Gastrocnemius medialis (tissue), 4 donors: ENCODE measurements at regions of chr1 and their contacts with region 1.

Region 1: DNA sequence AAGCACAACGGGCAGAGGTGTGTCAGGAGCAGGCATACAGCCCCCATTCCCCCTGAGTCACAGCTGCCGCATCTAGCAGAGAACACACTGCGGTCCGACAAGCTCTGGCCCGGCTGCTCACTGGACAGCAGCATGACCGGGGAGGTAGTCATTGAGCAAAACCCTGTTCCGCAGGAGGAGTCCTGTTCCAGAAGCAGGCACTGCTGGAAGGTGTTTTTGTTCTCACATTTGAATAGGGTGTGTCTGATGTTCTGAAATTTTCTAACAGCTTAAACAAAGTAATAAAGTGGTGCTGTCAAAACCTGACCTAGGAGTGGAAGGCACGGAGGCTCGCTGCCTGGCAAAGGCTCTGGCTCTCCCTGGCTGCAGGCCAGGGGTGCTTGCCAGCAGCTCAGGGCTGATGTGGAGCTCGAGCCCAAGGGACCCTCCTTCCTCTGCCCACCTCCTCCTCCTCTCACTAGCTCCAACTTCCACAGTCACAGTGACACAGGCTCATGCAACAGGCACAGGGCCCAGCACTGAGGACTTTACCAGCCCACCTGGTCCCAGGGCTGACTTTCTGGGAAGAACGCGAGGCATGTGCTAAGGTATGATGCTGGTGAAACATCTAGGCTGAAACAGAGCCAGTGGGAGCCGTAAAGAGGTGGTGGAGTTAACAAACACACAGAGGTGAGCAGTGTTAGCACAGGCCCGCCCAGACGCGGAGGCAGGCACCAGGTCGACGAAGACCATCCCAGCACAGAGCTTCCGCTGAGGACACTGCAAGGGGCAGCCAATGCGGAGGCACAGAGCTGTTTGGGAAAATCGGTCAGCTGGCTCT is 118.6 kb upstream of the IFFO2 start:
- DNase-seq: peak; percentile 82 to 83
- ATAC-seq: peak; percentile 75 to 77
- H3K4me3 ChIP-seq: no peak overlapping the region
- H3K27ac ChIP-seq: peak overlapping the region; percentile 66 to 91 (median 79)
- H3K4me1 ChIP-seq: peaks cover 39 to 48% of the 10 kb centered on the region in 2 donors
- H3K27me3 ChIP-seq: no peaks in the 10 kb centered on the region
- CTCF ChIP-seq: no peak
- POLR2A ChIP-seq: peak in 1 of 2 donors; percentile 33

Region 2: GRCh38 chr1:19046972-19047731 is 28.0 kb before region 1 on chr1:
- in situ Hi-C with region 1: no loop called
- intact Hi-C with region 1: loop called (anchors 1 kb)
- DNase-seq: no peak
- ATAC-seq: no peak
- H3K4me3 ChIP-seq: no peak overlapping the region
- H3K27ac ChIP-seq: no peak overlapping the region
- H3K4me1 ChIP-seq: no peaks in the 10 kb centered on the region
- H3K27me3 ChIP-seq: peaks cover 24 to 27% (median 26%) of the 10 kb centered on the region in 3 donors
- CTCF ChIP-seq: no peak
- POLR2A ChIP-seq: no peak

Region 3: GRCh38 chr1:19087737-19088594 is 12.9 kb after region 1 on chr1:
- in situ Hi-C with region 1: no loop called
- intact Hi-C with region 1: loop called (anchors 2 kb)
- DNase-seq: no peak
- ATAC-seq: no peak
- H3K4me3 ChIP-seq: no peak overlapping the region
- H3K27ac ChIP-seq: peak overlapping the region; percentile 79 to 90 (median 86)
- H3K4me1 ChIP-seq: peaks cover 59 to 67% of the 10 kb centered on the region in 2 donors
- H3K27me3 ChIP-seq: no peaks in the 10 kb centered on the region
- CTCF ChIP-seq: no peak
- POLR2A ChIP-seq: no peak